PC-3 (cell line): ENCODE measurements at regions of chr1 and their contacts with region 1.

Region 1: GRCh38 chr1:197614916-197615692 is 160.2 kb downstream of the DENND1B start:
- DNase-seq: peak; percentile 46
- ATAC-seq: peak; percentile 72
- H3K4me3 ChIP-seq: no peak overlapping the region
- H3K27ac ChIP-seq: no peak overlapping the region
- H3K4me1 ChIP-seq: no peaks in the 10 kb centered on the region
- H3K27me3 ChIP-seq: no peaks in the 10 kb centered on the region
- CTCF ChIP-seq: peak; percentile 63

Region 2: DNA sequence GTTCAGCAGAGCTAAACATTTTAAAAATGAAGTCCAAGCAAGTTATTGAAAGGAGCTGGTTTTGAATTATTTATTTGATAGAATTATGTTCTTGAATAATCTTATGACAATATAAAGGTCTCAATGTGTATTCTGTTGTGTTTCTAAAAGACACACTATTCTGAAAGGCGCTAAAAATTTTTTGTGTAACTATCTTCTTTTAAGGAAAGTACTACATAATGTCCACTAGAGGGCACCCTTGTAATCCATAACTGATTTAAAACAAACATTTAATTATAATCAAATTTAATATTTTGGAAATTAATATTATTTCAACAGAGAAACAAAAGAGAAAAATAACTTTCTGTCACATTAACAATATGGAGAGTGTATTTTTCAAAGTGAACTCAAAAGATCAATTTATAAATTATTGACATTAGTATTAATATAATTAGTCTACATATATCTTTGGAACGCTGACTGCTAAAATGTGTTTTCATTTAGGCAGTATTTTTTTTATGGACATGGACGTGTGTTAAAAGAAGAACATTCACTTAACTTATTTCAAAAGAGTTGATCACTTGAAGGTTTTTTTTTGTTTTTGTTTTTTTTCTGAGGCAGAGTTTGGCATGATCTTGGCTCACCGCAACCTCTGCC is 88.2 kb before region 1 on chr1:
- CTCF ChIA-PET with region 1: interaction called, 5 read pairs
- POLR2A ChIA-PET with region 1: no interaction called
- intact Hi-C with region 1: loop called (anchors 5 kb)
- DNase-seq: peak; percentile 43
- ATAC-seq: no peak
- H3K4me3 ChIP-seq: no peak overlapping the region
- H3K27ac ChIP-seq: no peak overlapping the region
- H3K4me1 ChIP-seq: no peaks in the 10 kb centered on the region
- H3K27me3 ChIP-seq: no peaks in the 10 kb centered on the region
- CTCF ChIP-seq: peak; percentile 48

Region 3: DNA sequence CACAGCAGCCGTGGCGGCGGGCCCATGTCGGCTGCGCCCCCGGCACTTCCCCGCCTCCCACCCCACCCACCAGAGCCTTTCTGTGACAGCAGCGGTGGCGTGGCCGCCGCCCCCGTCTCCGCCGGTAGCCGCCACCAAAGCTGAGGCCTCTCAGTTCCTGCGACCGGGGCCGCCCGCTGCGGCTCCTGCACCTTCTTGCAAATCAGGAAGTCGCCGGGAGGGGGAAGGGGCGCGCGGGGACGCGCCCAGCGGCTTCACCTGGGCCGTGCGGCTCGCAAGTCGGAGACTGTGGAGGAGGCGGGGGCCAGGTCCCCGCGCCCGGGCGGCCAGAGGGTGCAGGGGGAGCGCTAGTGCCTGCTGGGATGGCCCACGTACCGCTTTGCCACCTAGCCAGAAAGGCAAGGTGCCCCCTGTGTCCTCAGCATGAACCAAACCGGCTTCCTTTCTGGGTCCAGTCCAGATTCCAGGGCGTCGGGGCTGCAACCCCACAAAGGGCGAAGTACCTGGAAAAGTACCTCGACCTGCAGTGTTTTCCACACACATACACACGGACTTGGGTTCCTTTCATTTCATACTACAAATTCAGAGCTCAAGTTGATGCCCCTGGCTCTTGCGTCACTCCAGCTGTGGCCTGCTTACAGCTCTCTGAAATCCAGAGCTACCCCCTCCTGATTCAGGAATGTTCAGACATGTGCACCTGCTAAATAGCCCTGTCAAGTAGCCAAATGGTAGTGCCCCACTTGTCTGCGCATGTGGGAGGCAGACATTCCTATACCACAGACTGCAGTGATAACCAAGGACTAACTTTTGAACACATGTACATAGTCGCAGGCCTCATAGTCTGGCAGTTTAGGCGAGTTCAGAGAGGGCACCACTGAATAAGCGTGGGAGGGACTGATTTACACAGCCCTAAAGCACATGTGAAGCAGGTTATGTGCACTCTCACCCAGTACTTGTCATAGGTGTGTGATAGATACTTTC is 160.5 kb after region 1 on chr1 and contains the start of gene DENND1B:
- CTCF ChIA-PET with region 1: no interaction called
- POLR2A ChIA-PET with region 1: no interaction called
- intact Hi-C with region 1: loop called (anchors 2 kb)
- DNase-seq: peak; percentile 66
- ATAC-seq: peak; percentile 52
- H3K4me3 ChIP-seq: peak within 1 kb of the TSS; percentile 75
- H3K27ac ChIP-seq: peak within 1 kb of the TSS; percentile 97
- H3K4me1 ChIP-seq: peaks cover 33% of the 10 kb centered on the region
- H3K27me3 ChIP-seq: no peaks in the 10 kb centered on the region
- CTCF ChIP-seq: no peak
- total RNA-seq, gene DENND1B: 7.4 and 10.9 TPM in 2 replicates

Region 4: GRCh38 chr1:197915862-197916499 is 300.9 kb after region 1 on chr1:
- CTCF ChIA-PET with region 1: interaction called, 3 read pairs
- POLR2A ChIA-PET with region 1: no interaction called
- intact Hi-C with region 1: loop called (anchors 2 kb)
- DNase-seq: peak; percentile 79
- ATAC-seq: peak; percentile 83
- H3K4me3 ChIP-seq: peak overlapping the region; percentile 81
- H3K27ac ChIP-seq: no peak overlapping the region
- H3K4me1 ChIP-seq: peaks cover 4% of the 10 kb centered on the region; the same call in 1 of the 2 replicates
- H3K27me3 ChIP-seq: no peaks in the 10 kb centered on the region
- CTCF ChIP-seq: peak; percentile 70

Region 5: GRCh38 chr1:197924516-197925123 is 309.5 kb after region 1 on chr1:
- CTCF ChIA-PET with region 1: no interaction called
- POLR2A ChIA-PET with region 1: no interaction called
- intact Hi-C with region 1: loop called (anchors 2 kb)
- DNase-seq: peak; percentile 68
- ATAC-seq: peak; percentile 76
- H3K4me3 ChIP-seq: no peak overlapping the region
- H3K27ac ChIP-seq: no peak overlapping the region
- H3K4me1 ChIP-seq: no peaks in the 10 kb centered on the region
- H3K27me3 ChIP-seq: no peaks in the 10 kb centered on the region
- CTCF ChIP-seq: peak; percentile 72